Dendritic cell treated with granulocyte-macrophage colony-stimulating factor and Interleukin-4, amounts not matched to agents 40 ng/mL and 50 ng/mL, for 4 days (primary cell): ENCODE measurements at regions of chr15 and their contacts with region 1.

Region 1: DNA sequence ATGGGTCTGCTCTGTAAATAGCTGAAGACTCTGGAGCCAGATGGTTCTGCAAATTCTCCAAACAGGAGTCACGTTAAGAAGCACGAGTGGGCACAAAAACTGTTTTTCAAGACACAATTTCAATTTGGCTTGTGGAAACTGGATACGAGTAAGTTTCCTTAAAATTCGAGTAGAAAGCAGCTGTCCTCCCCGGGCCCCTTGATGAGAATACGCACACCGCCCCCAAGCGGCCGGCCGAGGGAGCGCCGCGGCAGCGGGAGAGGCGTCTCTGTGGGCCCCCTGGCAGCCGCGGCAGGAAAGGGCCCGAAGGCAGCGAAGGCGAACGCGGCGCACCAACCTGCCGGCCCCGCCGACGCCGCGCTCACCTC is 778 bp upstream of the THBS1 start:
- H3K4me3 Mint-ChIP-seq: peak overlapping the region; percentile 72
- H3K27ac Mint-ChIP-seq: no peak overlapping the region
- H3K4me1 Mint-ChIP-seq: peaks cover 23% of the 10 kb centered on the region
- H3K27me3 Mint-ChIP-seq: peaks cover 43% of the 10 kb centered on the region

Region 2: GRCh38 chr15:38707802-38708671 is 872.1 kb before region 1 on chr15:
- intact Hi-C with region 1: loop called (anchors 5 kb)
- H3K4me3 Mint-ChIP-seq: no peak overlapping the region
- H3K27ac Mint-ChIP-seq: no peak overlapping the region
- H3K4me1 Mint-ChIP-seq: no peaks in the 10 kb centered on the region
- H3K27me3 Mint-ChIP-seq: no peaks in the 10 kb centered on the region

Region 3: DNA sequence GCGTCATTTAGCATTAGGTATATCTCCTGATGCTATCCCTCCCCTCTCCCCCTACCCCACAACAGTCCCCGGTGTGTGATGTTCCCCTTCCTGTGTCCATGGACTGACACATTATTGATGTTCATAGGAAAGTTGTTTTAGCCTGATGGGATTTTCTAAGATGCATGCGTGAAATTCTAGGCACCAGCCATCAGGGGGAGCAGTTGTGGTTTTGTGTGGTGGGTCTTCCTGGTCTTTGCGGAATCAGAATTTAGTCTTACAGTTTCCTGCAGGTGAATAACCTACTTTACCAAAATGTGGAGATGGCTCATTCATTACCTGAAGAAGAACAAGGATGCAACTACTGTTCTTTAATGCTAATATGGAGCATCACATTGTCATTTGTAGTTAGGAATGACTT is 454.2 kb before region 1 on chr15:
- intact Hi-C with region 1: loop called (anchors 5 kb)
- H3K4me3 Mint-ChIP-seq: no peak overlapping the region
- H3K27ac Mint-ChIP-seq: no peak overlapping the region
- H3K4me1 Mint-ChIP-seq: no peaks in the 10 kb centered on the region
- H3K27me3 Mint-ChIP-seq: peaks cover 3% of the 10 kb centered on the region

Region 4: DNA sequence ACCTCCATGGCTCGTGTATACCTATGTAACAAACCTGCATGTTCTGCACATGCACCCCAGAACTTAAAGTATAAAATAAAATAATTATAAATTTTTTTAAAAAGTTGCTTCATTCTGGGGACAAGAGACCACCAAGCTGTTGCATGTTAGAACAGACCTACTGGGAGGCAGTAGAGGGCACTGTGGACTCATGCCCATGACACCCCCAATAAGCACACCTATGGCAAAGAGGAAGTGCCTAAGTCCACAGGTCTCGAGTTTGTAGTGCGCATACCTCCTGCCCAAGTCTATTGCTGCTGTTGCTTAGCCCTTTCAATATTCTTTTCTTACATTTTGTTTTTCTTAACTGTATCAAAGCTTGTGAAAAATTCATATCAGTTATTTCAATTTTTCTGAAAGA is 267.1 kb before region 1 on chr15:
- intact Hi-C with region 1: loop called (anchors 1 kb)
- H3K4me3 Mint-ChIP-seq: no peak overlapping the region
- H3K27ac Mint-ChIP-seq: no peak overlapping the region
- H3K4me1 Mint-ChIP-seq: peaks cover 6% of the 10 kb centered on the region
- H3K27me3 Mint-ChIP-seq: peaks cover 1% of the 10 kb centered on the region

Region 5: GRCh38 chr15:39605146-39605545 is 25.0 kb after region 1 on chr15:
- intact Hi-C with region 1: no loop called
- H3K4me3 Mint-ChIP-seq: no peak overlapping the region
- H3K27ac Mint-ChIP-seq: no peak overlapping the region
- H3K4me1 Mint-ChIP-seq: no peaks in the 10 kb centered on the region
- H3K27me3 Mint-ChIP-seq: no peaks in the 10 kb centered on the region

Region 6: DNA sequence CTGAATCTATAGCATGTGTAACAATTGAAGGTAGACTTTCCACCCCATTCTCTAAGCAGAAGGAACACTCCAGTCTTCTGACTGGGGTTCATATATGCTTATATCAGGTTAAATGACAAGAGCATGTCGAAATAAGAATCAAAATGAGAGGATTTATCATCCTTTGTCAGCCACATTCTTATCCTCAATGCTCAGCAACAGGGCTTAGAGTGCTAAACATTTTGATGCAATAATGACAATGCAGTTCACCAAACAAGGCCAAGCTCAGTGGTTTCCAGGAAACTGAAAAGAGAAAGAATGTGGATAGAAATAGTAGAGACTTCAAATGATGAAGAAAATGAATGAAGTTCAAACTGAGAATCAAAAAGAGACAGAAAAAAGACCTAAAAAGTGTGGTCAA is 124.6 kb after region 1 on chr15:
- intact Hi-C with region 1: no loop called
- H3K4me3 Mint-ChIP-seq: no peak overlapping the region
- H3K27ac Mint-ChIP-seq: no peak overlapping the region
- H3K4me1 Mint-ChIP-seq: no peaks in the 10 kb centered on the region
- H3K27me3 Mint-ChIP-seq: no peaks in the 10 kb centered on the region

Region 7: GRCh38 chr15:39756806-39757522 is 176.9 kb after region 1 on chr15:
- intact Hi-C with region 1: loop called (anchors 5 kb)
- H3K4me3 Mint-ChIP-seq: no peak overlapping the region
- H3K27ac Mint-ChIP-seq: no peak overlapping the region
- H3K4me1 Mint-ChIP-seq: no peaks in the 10 kb centered on the region
- H3K27me3 Mint-ChIP-seq: peaks cover 7% of the 10 kb centered on the region